GM23248 (cell line): ENCODE measurements at regions of chrX and their contacts with region 1.

Region 1: GRCh38 chrX:153667956-153668396 is 5.6 kb downstream of the PNCK start:
- DNase-seq: peak; percentile 72
- H3K4me3 ChIP-seq: no peak overlapping the region
- H3K27ac ChIP-seq: no peak overlapping the region
- H3K4me1 ChIP-seq: no peaks in the 10 kb centered on the region
- H3K27me3 ChIP-seq: no peaks in the 10 kb centered on the region

Region 2: DNA sequence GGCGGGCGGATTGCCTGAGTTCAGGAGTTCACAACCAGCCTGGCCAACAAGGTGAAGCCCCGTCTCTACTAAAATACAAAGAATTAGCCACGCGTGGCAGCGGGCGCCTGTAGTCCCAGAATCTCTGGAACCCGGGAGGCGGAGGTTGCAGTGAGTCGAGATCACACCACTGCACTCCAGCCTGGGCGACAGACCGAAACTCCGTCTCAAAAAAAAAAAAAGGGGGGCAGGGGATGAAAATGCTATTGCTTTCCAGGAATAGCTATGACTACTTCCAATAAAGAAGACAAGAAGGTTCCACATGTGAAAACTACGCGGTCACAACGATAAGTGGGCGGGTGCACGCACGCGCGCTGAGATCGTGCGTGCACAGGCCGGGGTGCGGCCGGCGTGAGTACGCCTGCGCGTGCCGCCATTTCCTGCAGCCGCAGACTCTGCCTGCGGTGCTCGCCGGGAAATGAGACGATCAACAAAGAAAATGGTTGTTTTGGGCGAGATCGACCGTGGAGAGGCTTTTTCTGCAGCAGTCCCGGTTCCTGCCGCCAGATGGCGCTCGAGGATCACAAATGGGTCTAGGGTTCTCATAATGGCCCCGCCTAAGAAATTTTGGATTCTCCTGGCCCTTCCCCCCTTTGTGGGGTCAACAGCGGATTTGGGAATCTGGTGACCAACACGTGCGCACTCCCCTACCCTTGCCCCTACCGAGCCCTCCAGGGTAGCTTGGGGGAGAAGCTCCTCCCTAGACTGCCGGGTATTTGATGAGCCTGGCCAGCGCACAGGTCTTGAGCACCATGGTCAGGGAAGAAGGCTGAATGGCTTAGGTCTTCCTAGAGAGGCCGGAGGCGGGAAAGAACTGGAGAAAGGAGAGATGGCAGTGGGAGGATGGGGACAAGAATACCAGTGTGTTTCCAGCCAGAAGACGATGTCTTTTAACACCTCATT is 709.2 kb before region 1 on chrX:
- in situ Hi-C with region 1: loop called (anchors 25 kb)
- DNase-seq: peak; percentile 93
- H3K4me3 ChIP-seq: peak overlapping the region; percentile 66
- H3K27ac ChIP-seq: peak overlapping the region; percentile 74
- H3K4me1 ChIP-seq: peaks cover 3% of the 10 kb centered on the region; the same call in 1 of the 2 replicates
- H3K27me3 ChIP-seq: no peaks in the 10 kb centered on the region

Region 3: GRCh38 chrX:153554519-153555167 is 113.3 kb before region 1 on chrX:
- in situ Hi-C with region 1: loop called (anchors 10 kb)
- DNase-seq: peak; percentile 63
- H3K4me3 ChIP-seq: no peak overlapping the region
- H3K27ac ChIP-seq: no peak overlapping the region
- H3K4me1 ChIP-seq: no peaks in the 10 kb centered on the region
- H3K27me3 ChIP-seq: no peaks in the 10 kb centered on the region